CD4-positive, alpha-beta T cell (primary cell): ENCODE measurements at regions of chr2 and their contacts with region 1.

Region 1: DNA sequence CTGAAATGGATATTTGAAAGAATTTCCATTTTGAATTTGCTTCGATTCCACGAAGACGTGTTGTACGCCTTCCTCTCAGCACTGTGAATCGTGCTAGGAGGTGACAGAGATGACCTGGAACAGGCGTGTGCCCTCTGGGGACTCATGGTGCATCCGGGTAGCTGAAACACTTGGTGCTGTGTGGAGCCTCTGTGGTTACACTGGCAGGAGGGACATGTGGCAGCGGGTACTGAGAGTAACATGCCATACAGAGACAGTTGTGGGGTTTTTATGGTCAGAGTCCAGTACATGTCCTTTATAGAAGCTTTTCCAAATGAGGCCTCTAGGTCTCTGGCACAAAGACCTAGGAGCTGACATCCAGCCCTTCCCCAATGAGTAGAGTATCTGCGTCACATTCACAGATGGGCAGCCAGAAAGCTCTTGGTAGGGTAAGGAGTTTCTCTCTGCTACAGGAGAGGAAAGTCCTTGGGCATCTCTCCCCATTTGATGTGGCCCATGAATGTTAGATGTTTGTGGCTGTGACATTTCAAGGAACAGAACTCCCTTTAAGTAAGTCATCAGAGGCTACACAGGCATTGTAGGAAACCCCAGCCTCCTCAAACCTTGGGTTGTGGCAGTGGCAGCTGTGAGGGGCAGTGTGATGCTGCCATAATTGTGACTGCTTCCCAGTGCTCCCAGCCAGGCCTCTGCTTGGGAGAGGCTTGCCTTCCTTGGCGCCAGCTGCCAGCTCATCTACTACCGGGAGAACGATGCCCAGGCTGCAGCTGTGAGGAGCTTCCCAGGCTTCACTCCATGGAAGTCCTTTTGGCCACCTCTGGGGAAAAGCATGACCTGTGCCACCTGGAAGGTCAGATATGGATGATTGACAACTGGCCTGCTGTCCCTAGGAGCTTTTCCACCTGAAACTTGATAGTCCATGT is 80.6 kb downstream of the ACOXL start:
- DNase-seq: no peak
- ATAC-seq: no peak
- H3K4me3 ChIP-seq: no peak overlapping the region
- H3K4me3 Mint-ChIP-seq: no peak overlapping the region
- H3K27ac ChIP-seq: no peak overlapping the region
- H3K27ac Mint-ChIP-seq: no peak overlapping the region
- H3K4me1 ChIP-seq: peaks cover 2% of the 10 kb centered on the region
- H3K4me1 Mint-ChIP-seq: peaks cover 4% of the 10 kb centered on the region
- H3K27me3 ChIP-seq: no peaks in the 10 kb centered on the region
- H3K27me3 Mint-ChIP-seq: no peaks in the 10 kb centered on the region
- CTCF ChIP-seq: no peak

Region 2: DNA sequence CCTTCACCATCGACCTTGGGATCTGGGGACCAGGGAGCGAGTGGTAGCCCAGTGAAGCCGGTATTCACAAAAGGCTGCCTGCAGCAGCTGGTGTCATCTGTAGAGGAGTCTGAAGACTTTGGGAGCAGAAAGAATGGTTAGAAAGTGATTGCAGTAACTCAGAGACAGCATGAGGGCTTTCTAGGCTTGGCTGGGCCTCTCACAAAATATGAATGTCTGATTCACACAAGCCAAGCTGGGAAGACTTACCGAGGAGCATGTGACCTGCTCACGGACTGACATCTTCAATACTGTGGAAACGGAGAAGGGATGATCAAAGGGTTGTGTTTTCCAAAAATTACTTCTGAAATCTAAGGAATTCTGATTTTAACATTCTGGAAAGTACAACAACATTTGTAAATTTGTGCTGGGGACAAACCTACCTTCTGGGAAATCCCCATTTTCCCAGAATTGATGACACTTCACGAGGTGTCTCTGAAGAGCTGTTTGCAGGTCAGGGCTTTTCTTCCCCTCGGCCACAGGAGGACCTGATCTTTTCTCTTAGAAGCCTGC is 31.0 kb after region 1 on chr2:
- CTCF ChIA-PET with region 1: interaction called, 4 read pairs
- POLR2A ChIA-PET with region 1: no interaction called
- intact Hi-C with region 1: loop called in 1 of 2 experiments (anchors 2 kb)
- DNase-seq: no peak
- ATAC-seq: no peak
- H3K4me3 ChIP-seq: no peak overlapping the region
- H3K4me3 Mint-ChIP-seq: no peak overlapping the region
- H3K27ac ChIP-seq: no peak overlapping the region
- H3K27ac Mint-ChIP-seq: peak overlapping the region; percentile 15
- H3K4me1 ChIP-seq: peaks cover 17% of the 10 kb centered on the region
- H3K4me1 Mint-ChIP-seq: peaks cover 47% of the 10 kb centered on the region
- H3K27me3 ChIP-seq: no peaks in the 10 kb centered on the region
- H3K27me3 Mint-ChIP-seq: no peaks in the 10 kb centered on the region
- CTCF ChIP-seq: no peak

Region 3: DNA sequence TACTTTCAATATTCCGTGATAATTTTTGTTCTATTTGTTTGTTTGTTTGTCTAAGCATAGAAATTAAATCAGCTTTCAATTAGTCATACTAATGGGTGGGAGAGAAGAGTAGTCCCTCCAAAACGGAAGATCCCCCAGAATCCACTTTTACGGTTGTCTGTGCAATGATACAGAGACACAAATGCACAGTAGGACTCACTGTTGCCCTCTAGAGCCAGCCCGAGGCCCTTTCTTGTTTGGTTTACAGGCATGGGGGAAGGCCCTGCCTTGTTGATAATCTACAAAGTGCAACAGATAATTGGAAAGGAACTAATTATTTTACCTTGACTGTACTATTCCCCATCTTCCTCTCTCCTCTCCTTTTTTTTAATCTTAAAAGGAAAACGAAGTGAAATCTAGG is 40.5 kb after region 1 on chr2:
- CTCF ChIA-PET with region 1: interaction called, 5 read pairs
- POLR2A ChIA-PET with region 1: no interaction called
- intact Hi-C with region 1: loop called in 1 of 2 experiments (anchors 2 kb)
- DNase-seq: peak in 11 of 14 experiments; percentile 17 to 75 (median 35)
- ATAC-seq: no peak
- H3K4me3 ChIP-seq: no peak overlapping the region
- H3K4me3 Mint-ChIP-seq: peak overlapping the region; percentile 9
- H3K27ac ChIP-seq: no peak overlapping the region
- H3K27ac Mint-ChIP-seq: peak overlapping the region; percentile 61
- H3K4me1 ChIP-seq: peaks cover 42% of the 10 kb centered on the region
- H3K4me1 Mint-ChIP-seq: peaks cover 52% of the 10 kb centered on the region
- H3K27me3 ChIP-seq: no peaks in the 10 kb centered on the region
- H3K27me3 Mint-ChIP-seq: no peaks in the 10 kb centered on the region
- CTCF ChIP-seq: peak; percentile 39

Region 4: DNA sequence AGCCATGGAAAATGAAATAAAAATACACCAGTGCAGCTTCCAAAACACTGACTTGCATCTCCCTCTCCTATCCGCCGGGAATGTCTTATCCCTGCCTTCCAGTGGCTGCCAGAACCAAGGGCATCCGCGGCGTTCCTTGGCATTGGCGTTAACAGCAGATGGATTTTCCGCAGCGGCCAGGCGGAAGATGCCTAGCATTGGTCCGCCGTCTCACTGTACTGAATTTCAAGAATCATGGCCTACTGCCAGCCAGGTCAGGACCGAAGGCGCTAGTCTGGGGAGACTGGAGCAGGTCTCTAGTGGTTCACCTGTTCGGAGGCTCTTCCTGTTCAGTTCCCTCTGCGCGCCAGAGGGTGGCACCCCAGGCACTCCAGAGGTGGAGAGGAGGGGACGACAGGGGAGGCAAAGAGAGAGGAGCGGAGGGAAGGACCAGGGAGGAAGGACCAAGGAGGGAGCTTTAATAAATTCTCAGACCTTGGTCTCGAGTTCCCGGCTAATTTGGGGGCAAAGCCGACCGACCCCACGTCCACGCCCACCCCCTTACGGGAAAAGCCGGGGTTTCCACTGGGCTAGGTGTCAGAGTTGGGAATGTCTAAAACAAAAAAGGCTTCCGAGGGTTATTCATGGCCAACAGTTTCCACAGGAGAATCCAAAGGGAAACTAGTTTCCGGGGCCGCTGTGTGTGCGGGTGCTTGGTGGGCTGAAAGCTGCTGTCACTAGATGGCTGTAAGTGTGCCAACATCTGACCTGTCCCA is 304.0 kb after region 1 on chr2:
- CTCF ChIA-PET with region 1: interaction called, 3 read pairs
- POLR2A ChIA-PET with region 1: no interaction called
- intact Hi-C with region 1: loop called (anchors 5 to 10 kb)
- DNase-seq: peak; percentile 49 to 87 (median 66)
- ATAC-seq: peak; percentile 62
- H3K4me3 ChIP-seq: peak overlapping the region; percentile 95
- H3K4me3 Mint-ChIP-seq: peak overlapping the region; percentile 82
- H3K27ac ChIP-seq: no peak overlapping the region
- H3K27ac Mint-ChIP-seq: no peak overlapping the region
- H3K4me1 ChIP-seq: peaks cover 50% of the 10 kb centered on the region
- H3K4me1 Mint-ChIP-seq: peaks cover 33% of the 10 kb centered on the region
- H3K27me3 ChIP-seq: peaks cover 46 to 60% of the 10 kb centered on the region in 2 experiments
- H3K27me3 Mint-ChIP-seq: peaks cover 67% of the 10 kb centered on the region
- CTCF ChIP-seq: peak; percentile 79

Region 5: GRCh38 chr2:111134055-111134454 is 321.1 kb after region 1 on chr2:
- CTCF ChIA-PET with region 1: no interaction called
- POLR2A ChIA-PET with region 1: no interaction called
- intact Hi-C with region 1: no loop called
- DNase-seq: no peak
- ATAC-seq: no peak
- H3K4me3 ChIP-seq: no peak overlapping the region
- H3K4me3 Mint-ChIP-seq: no peak overlapping the region
- H3K27ac ChIP-seq: no peak overlapping the region
- H3K27ac Mint-ChIP-seq: no peak overlapping the region
- H3K4me1 ChIP-seq: peaks cover 7% of the 10 kb centered on the region
- H3K4me1 Mint-ChIP-seq: peaks cover 32% of the 10 kb centered on the region
- H3K27me3 ChIP-seq: no peaks in the 10 kb centered on the region
- H3K27me3 Mint-ChIP-seq: no peaks in the 10 kb centered on the region
- CTCF ChIP-seq: no peak

Region 6: GRCh38 chr2:111702119-111702803 is 889.3 kb after region 1 on chr2:
- CTCF ChIA-PET with region 1: no interaction called
- POLR2A ChIA-PET with region 1: no interaction called
- intact Hi-C with region 1: loop called in 1 of 2 experiments (anchors 5 kb)
- DNase-seq: peak; percentile 11 to 66 (median 28)
- ATAC-seq: no peak
- H3K4me3 ChIP-seq: no peak overlapping the region
- H3K4me3 Mint-ChIP-seq: no peak overlapping the region
- H3K27ac ChIP-seq: no peak overlapping the region
- H3K27ac Mint-ChIP-seq: no peak overlapping the region
- H3K4me1 ChIP-seq: peaks cover 39% of the 10 kb centered on the region
- H3K4me1 Mint-ChIP-seq: peaks cover 16% of the 10 kb centered on the region
- H3K27me3 ChIP-seq: no peaks in the 10 kb centered on the region
- H3K27me3 Mint-ChIP-seq: no peaks in the 10 kb centered on the region
- CTCF ChIP-seq: peak; percentile 41